Activated CD4-positive, alpha-beta memory T cell treated with anti-CD3 and anti-CD28 coated beads for 36 hours (primary cell): ENCODE measurements at regions of chr1 and their contacts with region 1.

Region 1: DNA sequence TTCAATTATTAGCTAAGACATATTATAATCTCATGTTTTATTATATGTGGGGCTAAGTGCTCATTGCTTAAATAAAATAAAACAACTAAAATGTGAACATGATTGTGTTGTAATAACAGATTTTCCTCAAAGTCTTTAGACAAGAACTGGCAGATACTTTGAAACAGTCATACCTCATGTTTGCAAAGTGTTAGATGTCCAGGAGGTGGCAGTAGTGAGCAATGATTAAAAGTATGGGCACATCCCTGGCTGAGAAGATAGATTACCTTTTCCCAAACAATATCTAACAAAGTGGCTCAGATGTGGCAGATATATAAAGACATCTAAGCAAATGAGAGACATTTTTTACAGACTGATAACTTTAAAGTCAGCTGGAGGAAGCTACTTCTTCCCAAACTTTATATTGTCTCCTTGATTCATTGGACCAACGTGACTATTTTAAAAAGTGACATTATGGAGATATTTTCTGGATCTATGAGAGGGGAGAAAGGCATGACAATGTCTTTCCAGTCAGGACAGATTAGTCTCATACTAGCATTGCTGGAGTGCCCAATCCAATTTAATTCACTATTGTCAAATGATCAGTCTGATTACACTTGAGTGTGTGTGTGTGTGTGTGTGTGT is 269.8 kb downstream of the S1PR1 start:
- DNase-seq: peak; percentile 29
- H3K4me3 Mint-ChIP-seq: no peak overlapping the region
- H3K27ac Mint-ChIP-seq: no peak overlapping the region
- H3K4me1 Mint-ChIP-seq: no peaks in the 10 kb centered on the region
- H3K27me3 Mint-ChIP-seq: no peaks in the 10 kb centered on the region

Region 2: GRCh38 chr1:101420406-101420805 is 86.2 kb before region 1 on chr1:
- CTCF ChIA-PET with region 1: no interaction called
- POLR2A ChIA-PET with region 1: no interaction called
- intact Hi-C with region 1: no loop called
- DNase-seq: no peak
- H3K4me3 Mint-ChIP-seq: no peak overlapping the region
- H3K27ac Mint-ChIP-seq: no peak overlapping the region
- H3K4me1 Mint-ChIP-seq: no peaks in the 10 kb centered on the region
- H3K27me3 Mint-ChIP-seq: no peaks in the 10 kb centered on the region

Region 3: GRCh38 chr1:101451888-101452287 is 54.8 kb before region 1 on chr1:
- CTCF ChIA-PET with region 1: interaction called, 10 read pairs
- POLR2A ChIA-PET with region 1: no interaction called
- intact Hi-C with region 1: no loop called
- DNase-seq: peak; percentile 44
- H3K4me3 Mint-ChIP-seq: no peak overlapping the region
- H3K27ac Mint-ChIP-seq: peak overlapping the region; percentile 31
- H3K4me1 Mint-ChIP-seq: peaks cover 34% of the 10 kb centered on the region
- H3K27me3 Mint-ChIP-seq: peaks cover 10% of the 10 kb centered on the region

Region 4: GRCh38 chr1:101474039-101474665 is 32.5 kb before region 1 on chr1:
- CTCF ChIA-PET with region 1: interaction called, 13 read pairs
- POLR2A ChIA-PET with region 1: no interaction called
- intact Hi-C with region 1: no loop called
- DNase-seq: no peak
- H3K4me3 Mint-ChIP-seq: no peak overlapping the region
- H3K27ac Mint-ChIP-seq: no peak overlapping the region
- H3K4me1 Mint-ChIP-seq: no peaks in the 10 kb centered on the region
- H3K27me3 Mint-ChIP-seq: peaks cover 2% of the 10 kb centered on the region

Region 5: DNA sequence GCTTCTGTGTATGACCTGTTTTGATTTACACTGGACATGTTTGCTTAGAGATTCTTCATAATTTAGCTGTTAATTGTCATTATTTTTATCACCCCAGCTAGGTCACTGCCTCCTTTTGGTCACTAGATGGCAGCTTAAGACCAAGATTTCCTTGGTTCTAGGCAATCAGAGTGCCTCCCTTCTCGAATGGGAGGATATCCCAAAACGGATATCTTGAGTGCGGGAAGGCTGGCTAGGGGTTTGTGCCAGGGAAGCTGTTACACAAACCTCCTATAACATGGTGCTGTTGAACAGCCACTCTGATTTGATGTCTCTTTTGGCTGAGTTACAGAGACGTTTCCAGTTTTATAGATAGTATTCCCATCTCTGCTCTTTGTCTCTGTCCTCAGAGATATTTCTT is 13.6 kb after region 1 on chr1:
- CTCF ChIA-PET with region 1: interaction called, 27 read pairs
- POLR2A ChIA-PET with region 1: no interaction called
- intact Hi-C with region 1: no loop called
- DNase-seq: peak; percentile 13
- H3K4me3 Mint-ChIP-seq: no peak overlapping the region
- H3K27ac Mint-ChIP-seq: no peak overlapping the region
- H3K4me1 Mint-ChIP-seq: peaks cover 5% of the 10 kb centered on the region
- H3K27me3 Mint-ChIP-seq: peaks cover 3% of the 10 kb centered on the region

Region 6: DNA sequence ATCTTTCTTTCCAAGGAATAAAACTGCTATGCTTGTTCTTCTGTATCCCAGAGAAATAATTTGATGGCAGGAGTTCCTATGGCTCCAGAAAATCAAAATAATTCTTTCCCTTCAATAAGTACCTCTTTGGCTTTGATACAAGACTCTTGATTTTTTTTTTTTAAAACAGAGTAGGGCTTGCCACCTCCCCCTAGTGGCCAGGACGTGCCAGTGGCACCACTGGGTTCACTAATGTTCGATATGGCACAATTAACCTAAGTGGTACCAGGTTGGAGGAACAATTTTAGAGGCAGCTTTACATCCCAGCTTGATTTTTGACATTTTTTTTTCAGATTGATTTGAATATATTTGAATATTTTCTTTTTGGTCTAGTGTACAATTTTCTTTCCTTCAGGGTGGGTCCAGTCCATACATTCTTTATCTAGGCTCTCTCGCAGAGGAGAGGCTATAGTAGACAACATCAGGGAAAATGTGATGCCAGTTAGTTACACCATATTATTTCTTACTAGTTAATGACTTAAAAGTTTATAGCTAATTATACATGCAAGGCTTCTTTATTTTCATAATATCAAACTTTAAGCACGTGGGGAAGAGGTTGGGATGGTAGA is 61.0 kb after region 1 on chr1:
- CTCF ChIA-PET with region 1: interaction called, 10 read pairs
- POLR2A ChIA-PET with region 1: no interaction called
- intact Hi-C with region 1: loop called (anchors 5 kb)
- DNase-seq: peak; percentile 50
- H3K4me3 Mint-ChIP-seq: no peak overlapping the region
- H3K27ac Mint-ChIP-seq: no peak overlapping the region
- H3K4me1 Mint-ChIP-seq: no peaks in the 10 kb centered on the region
- H3K27me3 Mint-ChIP-seq: peaks cover 2% of the 10 kb centered on the region

Region 7: GRCh38 chr1:101587741-101588140 is 81.1 kb after region 1 on chr1:
- CTCF ChIA-PET with region 1: no interaction called
- POLR2A ChIA-PET with region 1: no interaction called
- intact Hi-C with region 1: no loop called
- DNase-seq: no peak
- H3K4me3 Mint-ChIP-seq: no peak overlapping the region
- H3K27ac Mint-ChIP-seq: no peak overlapping the region
- H3K4me1 Mint-ChIP-seq: no peaks in the 10 kb centered on the region
- H3K27me3 Mint-ChIP-seq: peaks cover 8% of the 10 kb centered on the region